ENCODE measurements at regions of chr2 and their contacts with region 1.

Region 1: DNA sequence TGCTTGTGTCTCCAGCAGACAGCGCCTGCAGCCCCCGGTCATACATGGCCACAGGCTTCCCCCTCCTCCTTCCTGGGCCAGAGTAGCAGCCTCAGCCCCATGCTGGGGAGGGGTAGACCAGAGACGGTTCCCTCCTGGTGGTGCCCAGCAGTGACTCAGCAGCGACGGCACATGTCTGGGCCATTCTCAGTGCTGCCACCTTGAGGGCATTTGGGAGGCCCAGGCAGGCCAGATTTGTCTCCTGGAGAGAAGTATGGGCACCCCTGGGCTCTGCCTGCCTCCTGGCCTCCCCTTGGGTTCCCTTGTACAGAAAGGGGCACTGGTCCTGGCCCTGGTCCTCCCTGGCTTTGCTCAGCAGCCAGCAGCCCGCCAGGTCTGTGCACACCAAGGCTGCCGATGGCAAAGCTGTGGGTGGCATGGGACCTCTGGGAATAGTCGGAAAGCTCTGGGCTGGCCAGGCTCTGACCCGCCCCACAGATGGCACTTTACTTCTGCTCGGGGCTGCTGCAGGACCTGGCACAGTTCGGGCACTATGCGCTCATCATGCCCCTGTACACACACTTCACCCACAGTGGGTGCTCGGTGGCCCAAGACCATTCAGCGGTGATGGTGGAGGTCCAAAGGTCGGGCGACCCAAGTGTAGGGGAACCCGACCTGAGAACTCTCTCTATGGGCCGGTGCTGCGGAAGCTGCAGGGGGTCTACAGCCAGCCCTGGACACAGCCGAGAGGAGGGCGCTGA is 11.4 kb upstream of the ALPI start:
- DNase-seq: peak; percentile 76
- H3K4me3 Mint-ChIP-seq: no peak overlapping the region
- H3K27ac Mint-ChIP-seq: no peak overlapping the region
- H3K4me1 Mint-ChIP-seq: no peaks in the 10 kb centered on the region
- H3K27me3 Mint-ChIP-seq: peaks cover 19% of the 10 kb centered on the region
- CTCF ChIP-seq: peak; percentile 61

Region 2: DNA sequence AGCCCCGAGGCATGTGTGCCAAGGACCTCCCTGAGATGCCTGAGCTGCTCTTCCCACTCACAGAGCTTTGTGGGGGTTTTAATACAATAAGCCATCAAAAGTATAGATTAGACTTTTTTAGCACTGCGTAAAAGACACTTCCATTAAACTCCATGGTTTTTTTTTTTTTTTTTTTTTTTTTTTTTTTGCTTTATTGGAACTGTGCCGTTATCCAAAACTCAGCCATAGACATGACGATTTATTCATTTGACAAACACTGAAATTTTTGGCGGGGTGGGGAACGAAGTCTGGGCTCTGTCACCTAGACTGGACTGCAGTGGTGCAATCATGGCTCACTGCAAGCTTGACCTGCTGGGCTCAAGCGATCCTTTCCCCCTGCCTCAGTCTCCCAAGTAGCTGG is 536.8 kb before region 1 on chr2:
- CTCF ChIA-PET with region 1: no interaction called
- intact Hi-C with region 1: loop called (anchors 2 kb)
- DNase-seq: no peak
- H3K4me3 Mint-ChIP-seq: no peak overlapping the region
- H3K27ac Mint-ChIP-seq: no peak overlapping the region
- H3K4me1 Mint-ChIP-seq: no peaks in the 10 kb centered on the region
- H3K27me3 Mint-ChIP-seq: peaks cover 47% of the 10 kb centered on the region
- CTCF ChIP-seq: no peak

Region 3: DNA sequence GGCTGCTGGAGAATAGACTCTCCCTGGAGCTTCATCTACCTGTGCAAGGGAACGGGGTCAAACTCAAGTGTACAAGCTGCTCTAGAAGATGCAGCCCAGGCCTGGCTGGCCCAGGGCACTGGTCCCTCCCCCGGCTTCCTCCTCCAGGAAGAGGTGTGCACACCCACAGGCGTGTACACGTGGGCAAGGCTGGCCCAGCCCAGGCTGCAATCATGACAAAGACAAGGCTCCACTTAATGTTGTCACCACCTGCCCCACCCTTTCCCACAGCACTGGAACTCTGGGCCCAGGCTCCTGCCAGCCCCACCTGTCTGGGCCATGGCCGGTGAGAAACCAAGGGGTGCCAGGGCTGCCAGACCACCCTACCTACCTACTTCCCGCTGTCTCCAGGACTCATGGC is 95.6 kb before region 1 on chr2:
- CTCF ChIA-PET with region 1: no interaction called
- intact Hi-C with region 1: loop called (anchors 5 kb)
- DNase-seq: peak; percentile 65
- H3K4me3 Mint-ChIP-seq: no peak overlapping the region
- H3K27ac Mint-ChIP-seq: no peak overlapping the region
- H3K4me1 Mint-ChIP-seq: no peaks in the 10 kb centered on the region
- H3K27me3 Mint-ChIP-seq: no peaks in the 10 kb centered on the region
- CTCF ChIP-seq: no peak